ENCODE measurements at regions of chr5 and their contacts with region 1.

Region 1: DNA sequence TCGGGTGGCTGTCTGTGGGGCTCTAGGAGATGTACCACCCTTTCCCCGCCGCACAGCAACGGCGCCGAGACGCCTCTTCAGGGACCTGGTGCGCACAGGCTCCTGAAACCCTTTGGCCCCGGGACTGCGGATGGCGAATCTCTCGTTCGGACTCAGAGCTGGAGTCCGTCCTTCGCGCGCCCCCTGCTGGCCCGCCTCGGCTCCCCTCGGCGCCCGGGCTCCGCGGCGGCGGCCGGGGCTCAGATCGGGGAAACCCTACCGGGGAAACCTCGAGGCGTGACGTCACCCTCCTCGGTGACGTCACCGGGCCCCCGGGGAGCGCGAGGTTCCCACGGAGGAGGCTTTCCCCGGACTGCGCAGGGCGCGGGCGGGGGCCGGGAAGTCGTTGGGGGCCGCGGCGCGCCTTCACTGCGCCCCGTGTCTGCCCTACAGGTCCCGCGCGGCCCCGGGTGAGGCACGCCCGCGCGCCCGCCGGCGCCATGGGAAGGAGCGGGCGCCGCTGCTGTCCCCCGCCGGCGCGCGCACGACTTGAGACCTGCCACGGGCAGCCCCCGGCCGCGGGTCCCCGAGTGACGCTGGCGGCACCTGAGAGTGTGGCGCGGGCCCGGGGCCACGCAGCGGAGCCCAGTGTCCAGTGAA is 7.9 kb downstream of the PRR7 start:
- DNase-seq: peak; percentile 94
- H3K4me3 Mint-ChIP-seq: peak overlapping the region; percentile 79
- H3K27ac Mint-ChIP-seq: no peak overlapping the region
- H3K4me1 Mint-ChIP-seq: peaks cover 27% of the 10 kb centered on the region
- H3K27me3 Mint-ChIP-seq: peaks cover 17% of the 10 kb centered on the region

Region 2: GRCh38 chr5:177303121-177303924 is 151.2 kb before region 1 on chr5 and contains the starts of genes PRELID1 and RAB24:
- CTCF ChIA-PET with region 1: interaction called, 17 read pairs
- POLR2A ChIA-PET with region 1: interaction called, 14 read pairs
- DNase-seq: peak; percentile 92
- H3K4me3 Mint-ChIP-seq: peak within 1 kb of the TSS; percentile 89
- H3K27ac Mint-ChIP-seq: peak within 1 kb of the TSS; percentile 92
- H3K4me1 Mint-ChIP-seq: peaks cover 74% of the 10 kb centered on the region
- H3K27me3 Mint-ChIP-seq: no peaks in the 10 kb centered on the region
- total RNA-seq, gene PRELID1: 153 to 156 TPM
- total RNA-seq, gene RAB24: 43.0 to 46.6 TPM

Region 3: GRCh38 chr5:177317959-177318377 is 136.5 kb before region 1 on chr5:
- CTCF ChIA-PET with region 1: interaction called, 18 read pairs
- POLR2A ChIA-PET with region 1: interaction called, 16 read pairs
- DNase-seq: peak; percentile 81
- H3K4me3 Mint-ChIP-seq: no peak overlapping the region
- H3K27ac Mint-ChIP-seq: no peak overlapping the region
- H3K4me1 Mint-ChIP-seq: peaks cover 53% of the 10 kb centered on the region
- H3K27me3 Mint-ChIP-seq: no peaks in the 10 kb centered on the region

Region 4: GRCh38 chr5:177370488-177371119 is 83.9 kb before region 1 on chr5:
- CTCF ChIA-PET with region 1: interaction called, 10 read pairs
- POLR2A ChIA-PET with region 1: interaction called, 7 read pairs
- DNase-seq: peak; percentile 79
- H3K4me3 Mint-ChIP-seq: peak overlapping the region; percentile 72
- H3K27ac Mint-ChIP-seq: peak overlapping the region; percentile 56
- H3K4me1 Mint-ChIP-seq: peaks cover 70% of the 10 kb centered on the region
- H3K27me3 Mint-ChIP-seq: no peaks in the 10 kb centered on the region

Region 5: DNA sequence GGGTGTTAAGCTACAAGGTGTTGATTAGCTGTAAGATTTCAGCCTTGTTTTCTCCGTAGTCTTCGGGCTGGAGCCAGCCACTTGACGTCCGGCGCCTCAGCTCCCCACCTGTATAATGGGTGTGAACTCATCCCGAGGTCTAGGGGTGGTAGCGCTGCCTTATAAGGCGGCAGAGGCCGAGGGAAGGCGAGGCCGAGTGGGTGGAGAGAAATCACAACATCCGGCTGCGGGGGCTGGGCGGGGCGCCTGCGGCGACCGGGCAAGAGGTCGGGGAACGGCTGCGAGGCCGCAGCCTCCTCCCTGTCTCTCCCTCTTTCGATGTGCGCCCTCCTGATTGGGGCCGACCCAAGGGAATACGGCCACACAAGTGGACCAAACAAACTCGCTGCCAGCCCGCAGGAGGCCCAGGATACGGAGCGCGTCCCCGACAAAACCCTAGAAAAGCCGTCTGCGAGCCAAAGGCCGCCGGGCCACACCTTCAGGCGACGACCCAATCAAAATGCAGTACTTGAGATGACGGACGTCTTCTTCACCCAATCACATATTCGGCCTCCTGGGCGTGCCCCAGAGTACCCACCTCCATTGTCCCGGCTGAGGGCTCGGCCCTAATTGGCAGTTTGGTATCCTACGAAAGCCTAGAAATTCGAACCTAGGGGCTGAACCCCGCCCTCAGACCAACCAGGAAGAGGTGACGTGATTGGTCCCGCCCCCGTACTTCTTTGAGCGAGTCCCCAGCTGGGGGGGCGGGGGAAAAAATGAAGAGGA is 28.5 kb before region 1 on chr5:
- CTCF ChIA-PET with region 1: interaction called, 51 read pairs
- POLR2A ChIA-PET with region 1: interaction called, 654 read pairs
- DNase-seq: peak; percentile 100
- H3K4me3 Mint-ChIP-seq: peak overlapping the region; percentile 95
- H3K27ac Mint-ChIP-seq: peak overlapping the region; percentile 98
- H3K4me1 Mint-ChIP-seq: peaks cover 44% of the 10 kb centered on the region
- H3K27me3 Mint-ChIP-seq: no peaks in the 10 kb centered on the region

Region 6: GRCh38 chr5:177431317-177432142 is 23.0 kb before region 1 on chr5:
- CTCF ChIA-PET with region 1: interaction called, 51 read pairs
- POLR2A ChIA-PET with region 1: interaction called, 654 read pairs
- DNase-seq: peak; percentile 89
- H3K4me3 Mint-ChIP-seq: peak overlapping the region; percentile 91
- H3K27ac Mint-ChIP-seq: peak overlapping the region; percentile 93
- H3K4me1 Mint-ChIP-seq: peaks cover 72% of the 10 kb centered on the region
- H3K27me3 Mint-ChIP-seq: no peaks in the 10 kb centered on the region

Region 7: DNA sequence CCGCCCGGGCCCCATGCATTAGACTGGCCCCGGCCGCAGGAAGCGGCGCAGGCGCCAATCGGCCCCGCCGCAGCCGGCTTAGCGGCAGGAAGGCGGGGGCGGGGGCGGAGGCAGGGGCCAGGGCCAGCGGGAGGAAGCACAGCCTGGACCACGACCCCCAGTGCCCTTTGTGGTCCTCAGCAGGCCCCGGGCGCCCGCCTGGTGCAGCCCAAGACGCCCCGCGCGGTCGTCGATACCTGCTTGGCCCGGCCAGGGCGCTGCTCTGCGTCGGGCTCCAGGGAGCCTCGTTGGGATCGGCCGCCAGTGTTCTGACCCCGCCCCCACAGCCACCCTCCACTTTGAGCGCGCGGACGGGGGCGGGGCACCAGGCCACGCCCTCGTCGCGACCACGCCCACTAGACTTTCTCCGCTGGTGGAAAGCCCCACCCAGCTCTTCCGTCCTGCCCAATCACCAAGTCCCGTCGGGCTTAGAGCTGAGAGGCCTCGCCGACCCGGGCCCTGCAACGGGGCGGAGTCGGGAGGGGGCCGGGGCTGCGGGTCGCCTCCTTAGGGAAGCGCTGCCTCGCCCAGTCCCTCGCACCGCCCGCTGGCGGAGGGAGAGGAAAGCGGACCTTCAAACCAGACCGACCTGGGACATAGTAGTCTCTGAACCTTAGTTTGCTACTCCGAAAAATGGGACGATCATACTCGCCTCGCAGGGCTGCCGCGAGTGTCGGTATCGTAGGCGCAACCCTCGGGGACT is 42.9 kb after region 1 on chr5 and contains the start of gene PDLIM7:
- CTCF ChIA-PET with region 1: interaction called, 21 read pairs
- POLR2A ChIA-PET with region 1: interaction called, 8 read pairs
- DNase-seq: peak; percentile 96
- H3K4me3 Mint-ChIP-seq: peak within 1 kb of the TSS; percentile 85
- H3K27ac Mint-ChIP-seq: peak within 1 kb of the TSS; percentile 42
- H3K4me1 Mint-ChIP-seq: peaks cover 49% of the 10 kb centered on the region
- H3K27me3 Mint-ChIP-seq: peaks cover 21% of the 10 kb centered on the region
- total RNA-seq, gene PDLIM7: 55.1 to 56.6 TPM

Measured in activated CD4-positive, alpha-beta memory T cell treated with anti-CD3 and anti-CD28 coated beads, Interleukin-2, amount 10 ng/mL, durations not matched to agents 7 days and 5 days (primary cell).